Naive thymus-derived CD4-positive, alpha-beta T cell (primary cell): ENCODE measurements at regions of chr19 and their contacts with region 1.

Region 1: DNA sequence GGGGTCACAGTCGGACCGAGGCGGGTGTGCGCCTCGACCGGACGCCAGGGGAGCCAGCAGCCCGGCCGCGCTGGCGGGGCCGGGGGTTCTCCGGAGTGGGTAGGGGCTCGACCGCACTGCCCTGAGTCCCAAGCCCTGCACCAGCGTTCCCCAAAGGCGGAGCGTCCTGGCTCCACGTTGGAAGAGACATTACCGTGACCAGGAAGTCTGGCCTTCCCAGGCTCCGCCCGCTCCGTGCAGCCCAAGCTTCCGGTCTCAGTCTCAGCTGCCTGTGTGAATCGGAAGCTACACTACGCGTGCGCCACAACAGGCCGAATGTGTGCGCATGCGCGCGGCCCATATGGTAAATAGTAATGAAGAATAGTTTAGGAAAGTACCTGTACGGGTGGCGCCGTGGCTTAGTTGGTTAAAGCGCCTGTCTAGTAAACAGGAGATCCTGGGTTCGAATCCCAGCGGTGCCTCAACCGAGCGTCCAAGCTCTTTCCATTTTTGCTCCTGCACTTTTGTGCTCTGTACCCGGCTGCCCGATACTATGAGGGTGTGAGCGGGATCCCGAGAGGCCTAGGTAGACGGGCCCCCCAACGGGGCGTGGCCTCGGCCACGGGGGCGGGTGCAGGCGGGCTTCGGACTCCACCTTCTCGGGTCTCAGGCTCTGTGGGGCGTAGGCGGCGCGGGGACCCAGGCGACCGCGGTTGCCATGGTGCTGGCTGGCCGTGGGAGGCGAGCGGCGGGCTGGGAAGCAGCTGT is 17.3 kb upstream of the LRP3 start:
- DNase-seq: peak; percentile 91 to 100 (median 99)
- ATAC-seq: peak; percentile 81
- H3K4me3 ChIP-seq: peak overlapping the region; percentile 98
- H3K4me3 Mint-ChIP-seq: peak overlapping the region; percentile 92 to 99 (median 97)
- H3K27ac ChIP-seq: peak overlapping the region; percentile 89
- H3K27ac Mint-ChIP-seq: peak overlapping the region; percentile 96 to 100 (median 100)
- H3K4me1 ChIP-seq: peaks cover 13 to 18% of the 10 kb centered on the region in 2 donors
- H3K4me1 Mint-ChIP-seq: peaks cover 29 to 58% (median 50%) of the 10 kb centered on the region in 7 donors
- H3K27me3 ChIP-seq: no peaks in the 10 kb centered on the region
- H3K27me3 Mint-ChIP-seq: peaks cover 0 to 13% (median 0%) of the 10 kb centered on the region in 5 donors

Region 2: DNA sequence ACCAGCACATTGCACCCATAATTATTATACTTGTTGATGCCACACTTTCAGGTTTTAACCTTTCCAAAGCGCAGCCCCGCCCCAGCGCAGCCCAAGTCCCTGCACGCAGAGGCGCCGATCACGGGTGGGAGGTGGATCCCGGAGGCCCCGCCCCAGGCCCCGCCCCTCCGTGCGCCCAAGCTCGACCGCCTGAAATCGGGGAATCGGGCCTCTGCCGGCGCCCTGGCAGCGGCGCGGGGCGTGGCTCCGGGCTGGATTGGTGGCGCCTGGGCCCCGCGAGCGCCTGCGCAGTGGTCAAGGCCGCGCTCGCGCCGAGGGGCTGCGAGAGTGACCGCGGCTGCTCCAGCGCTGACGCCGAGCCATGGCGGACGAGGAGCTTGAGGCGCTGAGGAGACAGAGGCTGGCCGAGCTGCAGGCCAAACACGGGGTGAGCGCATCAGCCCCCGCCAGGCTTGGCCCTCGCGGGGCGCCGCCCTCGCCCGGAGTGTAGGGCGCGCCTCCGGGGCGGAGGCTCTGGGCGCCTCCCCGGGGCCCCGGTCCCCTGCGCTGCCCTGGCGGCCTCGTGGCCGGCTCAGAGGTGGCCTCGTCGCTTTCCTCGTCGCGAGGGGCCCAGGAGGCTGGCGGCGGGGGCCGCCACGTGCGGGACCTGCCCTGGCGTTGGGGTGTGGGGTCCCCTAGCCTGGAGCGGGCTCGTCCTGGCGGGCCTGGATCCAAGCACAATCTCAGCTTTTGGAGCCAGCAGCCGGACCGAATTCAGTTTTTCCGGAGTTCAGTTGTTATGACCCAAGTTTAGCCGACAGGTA is 595.7 kb before region 1 on chr19 and contains the start of gene PDCD5:
- CTCF ChIA-PET with region 1: no interaction called
- POLR2A ChIA-PET with region 1: interaction called, 4 read pairs
- intact Hi-C with region 1: loop called in 1 of 2 experiments (anchors 1 kb)
- DNase-seq: peak; percentile 88 to 96 (median 93)
- ATAC-seq: peak; percentile 98
- H3K4me3 ChIP-seq: peak within 1 kb of the TSS; percentile 91
- H3K4me3 Mint-ChIP-seq: peak within 1 kb of the TSS; percentile 89 to 99 (median 94)
- H3K27ac ChIP-seq: peak within 1 kb of the TSS; percentile 77
- H3K27ac Mint-ChIP-seq: peak within 1 kb of the TSS; percentile 75 to 95 (median 90)
- H3K4me1 ChIP-seq: peaks cover 13 to 19% of the 10 kb centered on the region in 2 donors
- H3K4me1 Mint-ChIP-seq: peaks cover 10 to 46% (median 36%) of the 10 kb centered on the region in 7 donors
- H3K27me3 ChIP-seq: no peaks in the 10 kb centered on the region
- H3K27me3 Mint-ChIP-seq: peaks cover 0 to 20% (median 0%) of the 10 kb centered on the region in 5 donors
- total RNA-seq, gene PDCD5: 19.5 to 98.0 (median 51.2) TPM

Region 3: GRCh38 chr19:32971715-32972540 is 204.9 kb before region 1 on chr19 and contains the starts of genes CEP89 and FAAP24:
- CTCF ChIA-PET with region 1: no interaction called
- POLR2A ChIA-PET with region 1: interaction called, 13 read pairs
- intact Hi-C with region 1: loop called (anchors 1 kb)
- DNase-seq: peak; percentile 89 to 99 (median 98)
- ATAC-seq: peak; percentile 98
- H3K4me3 ChIP-seq: peak within 1 kb of the TSS; percentile 78
- H3K4me3 Mint-ChIP-seq: peak within 1 kb of the TSS; percentile 96 to 100 (median 99)
- H3K27ac ChIP-seq: peak within 1 kb of the TSS; percentile 75
- H3K27ac Mint-ChIP-seq: peak within 1 kb of the TSS; percentile 92 to 97 (median 97)
- H3K4me1 ChIP-seq: peaks cover 0 to 5% of the 10 kb centered on the region in 2 donors
- H3K4me1 Mint-ChIP-seq: peaks cover 14 to 27% (median 20%) of the 10 kb centered on the region in 7 donors
- H3K27me3 ChIP-seq: no peaks in the 10 kb centered on the region
- H3K27me3 Mint-ChIP-seq: no peaks in the 10 kb centered on the region
- total RNA-seq, gene CEP89: 7.4 to 22.4 (median 20.1) TPM
- total RNA-seq, gene FAAP24: 0.71 to 7.2 (median 2.5) TPM

Region 4: GRCh38 chr19:33143897-33144405 is 32.9 kb before region 1 on chr19:
- CTCF ChIA-PET with region 1: interaction called, 5 read pairs
- POLR2A ChIA-PET with region 1: interaction called, 6 read pairs
- intact Hi-C with region 1: loop called (anchors 1 kb)
- DNase-seq: peak; percentile 21 to 68 (median 49)
- ATAC-seq: peak; percentile 98
- H3K4me3 ChIP-seq: no peak overlapping the region
- H3K4me3 Mint-ChIP-seq: peak overlapping the region in 6 of 10 donors; percentile 0 to 58 (median 30)
- H3K27ac ChIP-seq: no peak overlapping the region
- H3K27ac Mint-ChIP-seq: no peak overlapping the region
- H3K4me1 ChIP-seq: no peaks in the 10 kb centered on the region
- H3K4me1 Mint-ChIP-seq: peaks cover 4 to 9% (median 8%) of the 10 kb centered on the region in 7 donors
- H3K27me3 ChIP-seq: no peaks in the 10 kb centered on the region
- H3K27me3 Mint-ChIP-seq: peaks cover 0 to 8% (median 3%) of the 10 kb centered on the region in 5 donors

Region 5: GRCh38 chr19:33195650-33196347 is 19.0 kb after region 1 on chr19:
- CTCF ChIA-PET with region 1: no interaction called
- POLR2A ChIA-PET with region 1: no interaction called
- intact Hi-C with region 1: no loop called
- DNase-seq: no peak
- ATAC-seq: no peak
- H3K4me3 ChIP-seq: no peak overlapping the region
- H3K4me3 Mint-ChIP-seq: peak overlapping the region in 1 of 10 donors; percentile 73
- H3K27ac ChIP-seq: no peak overlapping the region
- H3K27ac Mint-ChIP-seq: no peak overlapping the region
- H3K4me1 ChIP-seq: no peaks in the 10 kb centered on the region
- H3K4me1 Mint-ChIP-seq: peaks cover 0 to 7% (median 0%) of the 10 kb centered on the region in 7 donors
- H3K27me3 ChIP-seq: peaks cover 0 to 2% of the 10 kb centered on the region in 2 donors
- H3K27me3 Mint-ChIP-seq: peaks cover 30 to 48% (median 35%) of the 10 kb centered on the region in 5 donors

Region 6: DNA sequence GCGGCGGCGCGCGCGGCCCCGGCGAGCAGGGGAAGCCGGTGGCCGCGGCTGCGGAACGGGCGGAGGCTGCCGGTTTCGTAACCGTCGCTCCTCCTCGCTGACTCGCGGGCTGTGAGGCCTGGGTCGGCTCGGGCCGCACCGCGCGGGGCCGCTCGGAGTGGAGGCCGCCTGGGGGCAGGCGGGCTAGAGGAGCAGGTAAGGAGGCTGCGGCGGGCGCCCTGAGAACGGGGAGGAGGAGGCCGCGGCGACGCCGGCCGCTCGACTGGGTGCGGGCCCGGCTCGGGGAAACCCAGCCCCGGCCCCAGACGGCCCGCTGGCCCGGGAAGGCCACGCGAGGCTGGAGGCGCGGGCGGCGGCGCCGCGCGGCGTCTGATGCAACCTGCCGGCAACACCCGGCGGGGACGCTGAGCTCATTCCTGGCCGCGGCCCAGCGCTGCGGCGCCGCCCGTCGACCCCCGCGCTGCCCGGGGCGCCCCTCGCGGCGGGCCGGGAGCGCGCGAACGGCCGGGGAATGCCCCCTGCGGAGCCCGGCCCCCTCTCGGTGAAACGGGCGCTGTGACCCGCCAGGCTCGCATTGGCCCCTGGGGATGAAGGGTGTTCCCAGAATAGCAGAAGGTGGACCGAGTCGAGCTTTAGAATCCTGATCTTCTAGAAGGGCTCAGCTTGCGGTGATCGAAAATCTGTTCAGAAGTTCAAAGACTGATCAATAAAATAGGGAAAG is 197.0 kb after region 1 on chr19 and contains the start of gene CEBPG:
- CTCF ChIA-PET with region 1: no interaction called
- POLR2A ChIA-PET with region 1: interaction called, 24 read pairs
- intact Hi-C with region 1: loop called (anchors 1 kb)
- DNase-seq: peak in 2 of 9 donors; percentile 57 to 68
- ATAC-seq: peak; percentile 52
- H3K4me3 ChIP-seq: peak within 1 kb of the TSS; percentile 93
- H3K4me3 Mint-ChIP-seq: peak within 1 kb of the TSS; percentile 87 to 95 (median 92)
- H3K27ac ChIP-seq: peak within 1 kb of the TSS; percentile 98
- H3K27ac Mint-ChIP-seq: peak within 1 kb of the TSS; percentile 73 to 97 (median 85)
- H3K4me1 ChIP-seq: peaks cover 16 to 19% of the 10 kb centered on the region in 2 donors
- H3K4me1 Mint-ChIP-seq: peaks cover 36 to 52% (median 48%) of the 10 kb centered on the region in 7 donors
- H3K27me3 ChIP-seq: no peaks in the 10 kb centered on the region
- H3K27me3 Mint-ChIP-seq: peaks cover 0 to 3% (median 0%) of the 10 kb centered on the region in 5 donors
- total RNA-seq, gene CEBPG: 17.1 to 22.4 (median 21.1) TPM

Region 7: DNA sequence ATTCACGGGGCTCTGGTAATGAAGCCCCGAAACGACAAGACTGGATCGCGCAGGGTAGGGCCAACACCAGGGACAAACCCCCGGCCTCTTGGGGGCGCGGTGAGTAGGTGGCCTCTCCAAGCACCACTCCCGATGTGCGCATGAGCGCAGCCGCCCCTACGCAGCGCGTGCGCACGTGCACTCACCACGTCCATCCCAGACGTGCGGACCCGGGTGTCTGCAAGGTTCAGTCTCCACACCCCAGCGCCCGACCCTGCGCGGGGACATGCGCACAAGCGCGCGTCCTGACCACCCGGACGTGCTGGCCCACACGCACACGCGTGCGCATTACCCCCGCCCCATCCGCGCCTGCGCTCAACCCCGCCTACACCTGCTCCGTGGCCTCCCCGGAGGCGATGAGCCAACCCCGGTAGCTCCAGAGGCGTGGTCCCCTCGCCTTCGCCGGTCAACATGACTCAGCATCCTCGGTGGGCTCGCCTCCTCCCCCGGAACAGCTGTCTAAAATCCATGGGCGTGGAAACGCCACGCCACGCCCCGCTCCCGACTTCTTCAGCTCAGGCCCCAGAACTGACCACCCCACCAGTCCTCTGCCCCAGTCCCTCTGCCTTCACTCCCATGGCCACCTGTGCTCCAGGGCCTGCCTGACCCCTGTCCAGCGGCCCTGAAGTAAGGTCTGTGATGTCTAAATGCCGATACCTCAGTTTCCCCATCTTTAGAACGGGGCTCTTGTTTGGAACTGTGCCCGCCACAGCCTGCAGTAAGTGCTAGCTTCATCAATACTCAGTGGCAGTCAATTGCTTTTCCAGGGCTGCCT is 1182.5 kb after region 1 on chr19:
- CTCF ChIA-PET with region 1: no interaction called
- POLR2A ChIA-PET with region 1: no interaction called
- intact Hi-C with region 1: loop called (anchors 2 to 5 kb)
- DNase-seq: peak; percentile 77 to 99 (median 89)
- ATAC-seq: peak; percentile 95
- H3K4me3 ChIP-seq: peak overlapping the region; percentile 55
- H3K4me3 Mint-ChIP-seq: peak overlapping the region; percentile 80 to 93 (median 90)
- H3K27ac ChIP-seq: peak overlapping the region; percentile 66
- H3K27ac Mint-ChIP-seq: peak overlapping the region; percentile 87 to 95 (median 94)
- H3K4me1 ChIP-seq: peaks cover 11 to 15% of the 10 kb centered on the region in 2 donors
- H3K4me1 Mint-ChIP-seq: peaks cover 18 to 62% (median 27%) of the 10 kb centered on the region in 7 donors
- H3K27me3 ChIP-seq: no peaks in the 10 kb centered on the region
- H3K27me3 Mint-ChIP-seq: no peaks in the 10 kb centered on the region